PC-9 (cell line): ENCODE measurements at regions of chr6 and their contacts with region 1.

Region 1: DNA sequence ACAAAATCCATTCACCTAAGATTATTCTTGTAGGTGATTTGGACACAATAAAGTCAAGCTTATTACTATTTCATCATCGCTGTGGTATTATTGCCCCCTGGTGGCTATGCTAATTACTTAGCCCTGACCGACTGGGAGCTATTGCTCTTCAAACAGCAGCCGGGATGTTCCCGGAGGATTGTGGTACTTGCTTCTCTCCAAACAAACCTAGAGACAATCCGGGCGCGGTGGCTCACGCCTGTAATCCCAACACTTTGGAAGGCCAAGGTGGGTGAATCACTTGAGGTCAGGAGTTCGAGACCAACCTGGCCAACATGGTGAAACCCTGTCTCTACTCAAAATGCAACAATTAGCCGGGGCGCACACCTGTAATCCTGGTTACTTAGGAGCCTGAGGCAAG is 15.4 kb upstream of the STMND1 start:
- DNase-seq: peak; percentile 55 to 64
- H3K4me3 ChIP-seq: no peak overlapping the region
- H3K27ac ChIP-seq: no peak overlapping the region
- H3K4me1 ChIP-seq: no peaks in the 10 kb centered on the region
- H3K27me3 ChIP-seq: no peaks in the 10 kb centered on the region
- CTCF ChIP-seq: peak; percentile 83

Region 2: GRCh38 chr6:16332175-16332542 is 754.3 kb before region 1 on chr6:
- CTCF ChIA-PET with region 1: interaction called, 4 read pairs
- POLR2A ChIA-PET with region 1: no interaction called
- intact Hi-C with region 1: loop called (anchors 2 kb)
- DNase-seq: peak; percentile 62 to 76
- H3K4me3 ChIP-seq: no peak overlapping the region
- H3K27ac ChIP-seq: no peak overlapping the region
- H3K4me1 ChIP-seq: peaks cover 40% of the 10 kb centered on the region
- H3K27me3 ChIP-seq: no peaks in the 10 kb centered on the region
- CTCF ChIP-seq: peak; percentile 92

Region 3: GRCh38 chr6:16403831-16404230 is 682.6 kb before region 1 on chr6:
- CTCF ChIA-PET with region 1: no interaction called
- POLR2A ChIA-PET with region 1: no interaction called
- intact Hi-C with region 1: loop called (anchors 5 kb)
- DNase-seq: no peak
- H3K4me3 ChIP-seq: no peak overlapping the region
- H3K27ac ChIP-seq: no peak overlapping the region
- H3K4me1 ChIP-seq: no peaks in the 10 kb centered on the region
- H3K27me3 ChIP-seq: no peaks in the 10 kb centered on the region
- CTCF ChIP-seq: peak; percentile 61; the same call in 1 of the 2 replicates

Region 4: DNA sequence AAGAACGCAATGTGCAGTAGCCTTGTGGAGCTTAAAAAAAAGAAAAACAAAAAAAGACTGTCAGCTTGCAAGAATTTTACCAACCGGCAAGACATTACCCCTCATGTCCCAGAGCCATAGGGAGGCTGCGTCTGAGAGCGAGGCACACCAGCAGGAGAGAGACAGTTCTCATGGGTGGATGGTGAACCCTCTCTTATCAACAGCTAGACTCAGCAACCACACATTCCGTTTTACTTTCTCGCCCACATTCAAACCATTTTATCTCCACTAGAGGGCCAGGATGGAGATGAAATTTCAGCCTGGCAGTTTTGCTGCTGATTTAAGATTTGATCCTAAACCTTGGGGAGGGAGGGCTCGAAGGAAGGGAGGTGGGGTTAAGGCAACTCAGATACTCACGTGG is 572.2 kb before region 1 on chr6:
- CTCF ChIA-PET with region 1: interaction called, 3 read pairs
- POLR2A ChIA-PET with region 1: no interaction called
- intact Hi-C with region 1: loop called (anchors 10 kb)
- DNase-seq: no peak
- H3K4me3 ChIP-seq: no peak overlapping the region
- H3K27ac ChIP-seq: no peak overlapping the region
- H3K4me1 ChIP-seq: no peaks in the 10 kb centered on the region
- H3K27me3 ChIP-seq: no peaks in the 10 kb centered on the region
- CTCF ChIP-seq: peak; percentile 53

Region 5: GRCh38 chr6:16670183-16670582 is 416.3 kb before region 1 on chr6:
- CTCF ChIA-PET with region 1: interaction called, 11 read pairs
- POLR2A ChIA-PET with region 1: no interaction called
- intact Hi-C with region 1: no loop called
- DNase-seq: peak in 1 of 2 experiments; percentile 45
- H3K4me3 ChIP-seq: no peak overlapping the region
- H3K27ac ChIP-seq: peak overlapping the region; percentile 82
- H3K4me1 ChIP-seq: peaks cover 44% of the 10 kb centered on the region
- H3K27me3 ChIP-seq: no peaks in the 10 kb centered on the region
- CTCF ChIP-seq: no peak

Region 6: GRCh38 chr6:16964553-16965501 is 121.6 kb before region 1 on chr6:
- CTCF ChIA-PET with region 1: interaction called, 4 read pairs
- POLR2A ChIA-PET with region 1: no interaction called
- intact Hi-C with region 1: loop called (anchors 2 kb)
- DNase-seq: peak; percentile 77 to 82
- H3K4me3 ChIP-seq: 0 out of 2 replicates have a peak overlapping the region, but pooled peaks have one; percentile 22
- H3K27ac ChIP-seq: no peak overlapping the region
- H3K4me1 ChIP-seq: peaks cover 13% of the 10 kb centered on the region
- H3K27me3 ChIP-seq: no peaks in the 10 kb centered on the region
- CTCF ChIP-seq: peak; percentile 92

Region 7: DNA sequence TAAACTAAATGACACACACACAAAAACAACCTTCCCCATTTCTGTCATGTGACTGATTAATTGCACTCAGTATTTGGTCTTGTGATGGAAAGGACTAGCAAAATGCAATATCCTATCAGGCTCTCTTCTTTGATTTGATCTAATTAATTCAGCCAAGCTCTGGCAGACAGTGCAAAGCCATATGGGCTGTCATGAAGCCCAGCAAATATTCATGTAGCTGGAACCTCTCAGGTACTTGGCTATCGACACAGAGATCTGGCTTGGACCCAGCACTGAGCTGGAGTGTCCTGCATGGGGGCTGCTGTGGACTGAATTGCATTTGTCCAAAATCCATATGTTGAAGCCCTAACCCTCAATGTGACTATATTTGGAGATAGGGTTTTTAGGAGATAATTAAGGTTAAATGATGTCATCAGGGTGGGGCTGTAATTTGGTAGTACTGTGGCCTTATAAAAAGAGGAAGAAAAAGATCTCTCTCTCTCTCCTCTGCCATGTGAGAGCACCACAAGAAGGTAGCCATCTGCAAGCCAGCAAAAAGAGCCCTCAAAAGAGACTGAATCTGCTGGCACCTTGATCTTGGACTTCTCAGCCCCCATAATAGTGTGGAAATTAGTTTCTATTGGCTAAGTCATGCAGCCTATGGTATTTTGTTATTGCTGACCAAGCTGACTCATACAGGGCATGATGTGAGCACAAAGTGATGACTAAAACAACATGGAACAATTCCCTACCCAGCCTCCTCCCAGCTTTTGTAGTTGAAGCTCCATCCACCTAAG is 92.5 kb after region 1 on chr6:
- CTCF ChIA-PET with region 1: interaction called, 12 read pairs
- POLR2A ChIA-PET with region 1: no interaction called
- intact Hi-C with region 1: no loop called
- DNase-seq: no peak
- H3K4me3 ChIP-seq: no peak overlapping the region
- H3K27ac ChIP-seq: no peak overlapping the region
- H3K4me1 ChIP-seq: no peaks in the 10 kb centered on the region
- H3K27me3 ChIP-seq: no peaks in the 10 kb centered on the region
- CTCF ChIP-seq: no peak